IMR-90 (cell line): ENCODE measurements at regions of chr4 and their contacts with region 1.

Region 1: GRCh38 chr4:54233277-54233696 is 4.2 kb downstream of the PDGFRA start:
- DNase-seq: peak; percentile 85
- ATAC-seq: peak; percentile 36
- H3K4me3 ChIP-seq: peak overlapping the region; percentile 89
- H3K27ac ChIP-seq: peak overlapping the region; percentile 94
- H3K4me1 ChIP-seq: peaks cover 2% of the 10 kb centered on the region
- H3K27me3 ChIP-seq: no peaks in the 10 kb centered on the region
- CTCF ChIP-seq: peak; percentile 85
- POLR2A ChIP-seq: no peak
- RAD21 ChIP-seq: peak; percentile 92

Region 2: DNA sequence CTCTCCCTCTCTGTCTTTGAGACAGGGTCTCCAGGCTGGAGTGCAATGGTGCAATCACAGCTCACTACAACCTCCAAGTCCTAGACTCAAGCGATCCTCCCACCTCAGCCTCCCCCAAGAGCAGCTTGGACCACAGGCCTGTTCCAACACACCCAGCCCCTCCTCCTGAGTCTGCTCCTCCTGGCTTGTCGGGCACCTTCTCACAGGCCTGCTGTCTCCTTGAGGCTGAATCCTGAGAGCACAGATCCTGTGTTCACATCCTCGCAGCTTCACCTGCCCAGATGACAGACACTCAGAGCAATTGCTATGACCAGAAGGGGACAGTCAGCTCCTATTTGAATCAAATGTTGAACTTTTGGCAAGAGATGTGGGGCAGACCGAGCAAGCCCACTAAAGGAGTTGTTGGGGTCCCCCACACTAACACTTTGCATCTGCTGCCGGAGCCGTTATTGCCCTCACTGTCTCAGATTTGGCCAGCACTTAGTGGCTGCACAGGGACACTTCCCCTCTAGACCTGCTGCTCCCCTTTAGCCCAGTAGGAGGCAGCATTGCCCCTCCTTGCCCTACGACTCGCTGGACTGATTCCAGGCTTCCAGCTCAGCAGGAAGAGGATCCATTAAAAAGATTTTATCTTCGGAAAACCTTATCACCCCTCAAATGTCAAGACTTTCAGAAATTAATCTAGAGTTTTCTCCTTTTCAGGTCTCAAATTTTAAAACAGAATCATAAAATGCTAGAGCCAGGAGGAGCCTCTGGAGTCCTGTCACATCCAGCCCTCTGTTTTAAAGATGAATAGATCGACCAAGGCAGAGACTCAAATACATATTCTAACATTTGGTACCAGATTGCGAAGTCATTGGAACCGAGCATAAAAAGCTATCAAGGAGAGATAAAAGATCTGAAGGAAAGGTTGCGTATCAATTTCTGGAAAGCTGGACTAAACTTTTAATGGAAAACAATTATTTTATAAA is 1687.9 kb before region 1 on chr4:
- CTCF ChIA-PET with region 1: no interaction called
- POLR2A ChIA-PET with region 1: no interaction called
- dilution Hi-C with region 1: no loop called
- in situ Hi-C with region 1: loop called (anchors 25 kb)
- intact Hi-C with region 1: no loop called
- DNase-seq: peak; percentile 65
- ATAC-seq: peak; percentile 95
- H3K4me3 ChIP-seq: no peak overlapping the region
- H3K27ac ChIP-seq: no peak overlapping the region
- H3K4me1 ChIP-seq: no peaks in the 10 kb centered on the region
- H3K27me3 ChIP-seq: no peaks in the 10 kb centered on the region
- CTCF ChIP-seq: peak; percentile 98
- POLR2A ChIP-seq: peak; percentile 53; the same call in 1 of the 2 replicates
- RAD21 ChIP-seq: peak; percentile 99

Region 3: DNA sequence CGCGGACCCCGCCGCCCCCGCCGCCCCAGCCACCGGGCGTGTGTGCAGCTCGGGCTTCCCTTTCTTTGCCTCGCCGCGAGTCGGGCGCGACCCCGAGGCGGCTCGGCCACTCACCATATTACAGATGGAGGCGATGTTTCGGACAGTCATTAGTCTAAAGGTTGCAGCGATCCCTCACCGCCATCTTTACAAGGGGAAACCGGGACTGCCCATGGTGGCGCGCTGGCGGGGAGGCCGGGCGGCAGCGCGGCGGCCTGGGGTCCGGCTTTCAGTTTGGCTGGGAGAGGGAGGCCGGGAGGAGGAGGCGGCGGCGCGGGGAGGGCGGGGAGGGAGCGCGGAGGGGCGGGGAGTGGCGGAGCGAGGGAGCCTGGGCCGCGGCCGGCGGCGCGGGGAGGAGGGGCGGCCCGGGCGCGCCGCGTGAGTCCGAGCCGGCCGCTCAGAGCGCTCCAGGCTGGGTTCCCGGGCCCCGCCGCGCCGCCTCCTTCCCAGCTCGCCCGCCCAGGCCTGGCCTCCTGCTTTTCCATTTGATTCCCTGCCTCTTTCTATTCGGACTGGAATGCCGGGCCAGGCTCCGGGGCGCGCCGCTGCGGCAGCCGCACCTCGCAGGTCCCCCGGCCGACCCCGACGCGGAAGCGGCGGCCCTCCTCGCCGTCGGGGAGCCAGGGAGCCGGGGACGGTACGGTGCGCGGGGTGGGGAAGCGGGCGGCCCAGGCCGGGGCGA is 1574.1 kb before region 1 on chr4 and contains the start of gene USP46:
- CTCF ChIA-PET with region 1: no interaction called
- POLR2A ChIA-PET with region 1: no interaction called
- dilution Hi-C with region 1: no loop called
- in situ Hi-C with region 1: no loop called
- intact Hi-C with region 1: loop called (anchors 10 kb)
- DNase-seq: peak; percentile 69
- ATAC-seq: peak; percentile 92
- H3K4me3 ChIP-seq: peak within 1 kb of the TSS; percentile 99
- H3K27ac ChIP-seq: peak within 1 kb of the TSS; percentile 99
- H3K4me1 ChIP-seq: peaks cover 4% of the 10 kb centered on the region
- H3K27me3 ChIP-seq: no peaks in the 10 kb centered on the region
- CTCF ChIP-seq: no peak
- POLR2A ChIP-seq: no peak
- RAD21 ChIP-seq: no peak
- total RNA-seq, gene USP46: 15.4 and 20.3 TPM in 2 replicates

Region 4: DNA sequence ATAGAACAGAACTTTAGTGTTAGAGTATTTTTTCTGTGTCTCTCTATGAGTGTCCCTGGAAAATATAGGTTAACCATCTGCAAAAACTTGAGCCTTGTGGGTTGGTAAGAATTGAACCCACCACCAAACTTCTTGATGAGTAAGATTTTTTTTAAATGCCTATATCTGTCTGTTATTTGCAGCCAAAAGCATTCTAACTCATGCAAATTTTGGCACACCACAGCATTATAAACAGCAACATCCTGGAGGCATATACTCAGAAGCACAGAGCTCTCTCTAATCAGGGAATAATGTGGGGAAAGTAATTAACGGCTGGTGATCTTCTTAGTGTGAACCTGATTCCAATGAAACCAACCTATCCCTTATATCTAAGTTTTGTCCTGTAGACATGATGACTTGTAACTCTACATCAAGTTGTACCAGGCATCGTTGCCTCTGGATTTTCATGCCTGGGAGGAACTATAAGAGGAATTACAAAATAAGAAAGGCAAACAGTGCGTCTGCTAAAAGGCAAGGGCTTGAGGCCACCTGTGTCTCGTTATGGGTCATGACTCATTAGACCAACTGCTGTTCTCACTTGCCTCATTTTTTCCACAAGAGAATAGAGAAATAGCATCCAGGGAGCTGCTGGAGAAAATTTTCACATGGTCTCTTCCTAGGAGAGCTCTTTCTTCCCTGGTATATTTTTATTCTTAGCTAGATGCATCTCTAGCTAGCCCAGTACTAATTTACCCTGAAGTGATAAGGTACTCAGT is 371.3 kb before region 1 on chr4:
- CTCF ChIA-PET with region 1: no interaction called
- POLR2A ChIA-PET with region 1: no interaction called
- dilution Hi-C with region 1: no loop called
- in situ Hi-C with region 1: no loop called
- intact Hi-C with region 1: loop called (anchors 5 kb)
- DNase-seq: peak; percentile 96
- ATAC-seq: peak; percentile 70
- H3K4me3 ChIP-seq: no peak overlapping the region
- H3K27ac ChIP-seq: peak overlapping the region; percentile 89; the same call in 1 of the 2 replicates
- H3K4me1 ChIP-seq: peaks cover 15% of the 10 kb centered on the region
- H3K27me3 ChIP-seq: no peaks in the 10 kb centered on the region
- CTCF ChIP-seq: no peak
- POLR2A ChIP-seq: no peak
- RAD21 ChIP-seq: peak; percentile 25; the same call in 1 of the 2 replicates

Region 5: DNA sequence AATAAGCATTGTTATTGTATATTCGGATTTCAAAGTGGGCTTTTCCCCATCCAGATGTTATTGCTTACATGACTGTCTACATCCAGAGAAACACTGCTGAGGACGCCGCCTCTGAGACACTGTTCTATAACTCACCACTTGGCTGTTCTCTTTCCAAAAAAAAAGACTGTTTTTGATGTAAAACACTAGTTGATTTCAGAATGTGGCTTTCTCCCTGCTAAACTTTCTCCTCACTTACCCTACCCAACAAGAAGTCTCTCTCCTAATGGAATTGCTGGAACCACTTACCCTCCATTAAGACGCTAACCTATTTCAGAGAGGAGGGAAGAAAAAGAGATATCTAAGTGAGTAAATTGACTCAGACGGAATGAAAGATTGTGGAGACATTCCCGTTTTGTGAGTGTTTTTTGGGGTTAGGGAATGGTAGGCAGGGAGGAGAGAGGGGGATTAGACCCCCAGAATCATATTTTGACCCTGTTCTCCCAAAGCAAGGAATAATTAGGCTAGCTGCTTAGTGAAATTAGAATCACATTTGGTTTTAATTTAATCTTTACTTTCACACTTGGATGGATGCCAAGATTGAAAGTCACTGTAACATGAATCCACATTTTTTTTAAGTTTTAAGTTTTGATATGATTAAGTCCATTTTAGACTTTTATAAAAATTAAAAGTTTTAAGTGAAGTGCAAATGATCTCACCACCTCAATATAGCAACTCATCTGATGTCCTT is 343.8 kb before region 1 on chr4:
- CTCF ChIA-PET with region 1: no interaction called
- POLR2A ChIA-PET with region 1: no interaction called
- dilution Hi-C with region 1: no loop called
- in situ Hi-C with region 1: no loop called
- intact Hi-C with region 1: no loop called
- DNase-seq: peak; percentile 76
- ATAC-seq: peak; percentile 89
- H3K4me3 ChIP-seq: no peak overlapping the region
- H3K27ac ChIP-seq: peak overlapping the region; percentile 46; the same call in 1 of the 2 replicates
- H3K4me1 ChIP-seq: peaks cover 16% of the 10 kb centered on the region
- H3K27me3 ChIP-seq: no peaks in the 10 kb centered on the region
- CTCF ChIP-seq: no peak
- POLR2A ChIP-seq: no peak
- RAD21 ChIP-seq: no peak

Region 6: GRCh38 chr4:53914313-53915016 is 318.8 kb before region 1 on chr4:
- CTCF ChIA-PET with region 1: interaction called, 13 read pairs
- POLR2A ChIA-PET with region 1: no interaction called
- dilution Hi-C with region 1: no loop called
- in situ Hi-C with region 1: loop called (anchors 5 kb)
- intact Hi-C with region 1: no loop called
- DNase-seq: peak; percentile 96
- ATAC-seq: peak; percentile 83
- H3K4me3 ChIP-seq: no peak overlapping the region
- H3K27ac ChIP-seq: peak overlapping the region; percentile 34
- H3K4me1 ChIP-seq: peaks cover 14% of the 10 kb centered on the region
- H3K27me3 ChIP-seq: no peaks in the 10 kb centered on the region
- CTCF ChIP-seq: no peak
- POLR2A ChIP-seq: no peak
- RAD21 ChIP-seq: no peak